ENCODE measurements at regions of chr3 and their contacts with region 1.

Region 1: DNA sequence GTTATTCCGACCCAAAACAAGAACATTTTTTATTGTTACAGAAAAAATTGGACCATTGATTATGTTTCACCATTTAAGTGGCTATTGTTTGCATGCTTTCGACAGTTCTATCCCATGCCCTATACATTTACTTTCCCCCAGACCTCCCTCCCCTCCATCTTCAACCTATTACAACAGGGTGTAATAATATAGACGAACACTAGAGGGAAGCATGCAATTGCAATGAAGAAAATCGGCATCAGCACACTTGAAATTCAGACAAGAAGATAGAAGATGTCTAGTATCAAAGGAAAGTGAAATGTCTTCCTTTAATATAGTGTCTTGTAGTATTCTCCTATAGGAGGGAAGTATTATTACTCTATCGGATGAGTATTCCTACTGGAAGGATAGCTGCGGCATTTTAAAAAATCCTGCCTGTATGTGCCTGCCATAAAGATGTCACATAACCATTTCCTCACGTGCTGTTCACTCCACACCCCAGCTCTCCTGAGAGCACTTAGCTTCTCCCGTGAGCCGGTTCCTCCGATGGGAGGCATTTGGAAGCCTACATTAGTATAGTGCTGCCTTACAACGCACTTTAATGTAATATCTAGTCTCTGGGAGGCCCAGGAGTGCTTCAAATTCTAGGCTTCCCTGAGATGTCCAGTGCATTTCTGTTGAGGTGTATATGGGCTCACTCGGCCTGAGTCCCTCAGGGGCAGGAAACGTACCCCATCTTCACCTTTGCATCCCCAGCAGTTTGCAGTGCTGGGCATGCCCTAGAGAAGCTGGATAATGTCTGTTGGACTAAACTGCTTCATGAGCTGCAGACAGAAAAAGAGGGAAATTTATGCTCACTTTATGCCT is 17.8 kb upstream of the ERICH6 start:
- DNase-seq: peak; percentile 65
- H3K4me3 Mint-ChIP-seq: no peak overlapping the region
- H3K27ac Mint-ChIP-seq: no peak overlapping the region
- H3K4me1 Mint-ChIP-seq: peaks cover 16% of the 10 kb centered on the region
- H3K27me3 Mint-ChIP-seq: no peaks in the 10 kb centered on the region
- CTCF ChIP-seq: peak; percentile 77

Region 2: DNA sequence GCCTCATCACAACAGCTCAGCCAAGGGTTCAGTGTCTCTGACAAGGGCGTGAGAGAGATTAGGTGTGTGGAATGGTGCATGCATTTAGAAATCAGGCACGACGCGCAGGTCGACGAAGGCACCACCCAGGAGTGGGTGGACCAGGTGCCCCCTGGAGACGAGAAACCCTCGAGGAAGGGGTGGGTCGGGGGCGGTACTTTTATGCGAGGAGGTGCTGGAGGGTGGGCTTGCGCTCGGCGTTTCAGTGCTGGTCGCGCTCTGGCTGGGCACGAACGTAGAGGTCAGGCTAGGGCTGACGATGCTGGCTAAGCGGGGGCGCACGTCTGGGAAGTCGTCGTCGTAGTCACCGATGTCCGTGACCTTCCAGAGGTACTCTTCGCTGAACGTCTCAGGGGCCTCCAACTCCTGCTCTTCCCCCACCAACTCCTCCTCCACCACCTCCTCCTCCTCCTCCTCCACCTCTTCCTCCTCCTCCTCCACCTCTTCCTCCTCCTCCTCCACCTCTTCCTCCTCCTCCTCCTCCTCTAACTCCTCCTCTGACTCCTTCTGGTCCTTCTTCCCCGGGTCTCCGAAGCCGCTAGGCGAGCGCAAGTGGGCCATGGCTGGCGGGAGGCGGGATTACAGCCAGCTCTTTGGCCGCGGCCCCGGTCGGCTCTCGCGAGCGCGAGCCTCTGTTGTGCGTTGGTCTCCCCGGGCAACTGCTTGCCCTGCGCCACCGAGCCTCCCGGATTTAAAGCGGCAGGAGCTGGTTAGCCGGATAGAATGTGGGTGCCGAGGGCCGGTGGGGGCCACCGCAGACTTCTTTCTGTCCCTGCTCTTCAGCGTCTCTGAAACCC is 18.0 kb before region 1 on chr3 and contains the start of gene ERICH6:
- CTCF ChIA-PET with region 1: interaction called, 11 read pairs
- POLR2A ChIA-PET with region 1: interaction called, 3 read pairs
- intact Hi-C with region 1: no loop called
- DNase-seq: peak; percentile 86
- H3K4me3 Mint-ChIP-seq: peak within 1 kb of the TSS; percentile 79
- H3K27ac Mint-ChIP-seq: peak within 1 kb of the TSS; percentile 90
- H3K4me1 Mint-ChIP-seq: peaks cover 10% of the 10 kb centered on the region
- H3K27me3 Mint-ChIP-seq: no peaks in the 10 kb centered on the region
- CTCF ChIP-seq: no peak
- total RNA-seq, gene ERICH6: not detected in 2 replicates

Region 3: DNA sequence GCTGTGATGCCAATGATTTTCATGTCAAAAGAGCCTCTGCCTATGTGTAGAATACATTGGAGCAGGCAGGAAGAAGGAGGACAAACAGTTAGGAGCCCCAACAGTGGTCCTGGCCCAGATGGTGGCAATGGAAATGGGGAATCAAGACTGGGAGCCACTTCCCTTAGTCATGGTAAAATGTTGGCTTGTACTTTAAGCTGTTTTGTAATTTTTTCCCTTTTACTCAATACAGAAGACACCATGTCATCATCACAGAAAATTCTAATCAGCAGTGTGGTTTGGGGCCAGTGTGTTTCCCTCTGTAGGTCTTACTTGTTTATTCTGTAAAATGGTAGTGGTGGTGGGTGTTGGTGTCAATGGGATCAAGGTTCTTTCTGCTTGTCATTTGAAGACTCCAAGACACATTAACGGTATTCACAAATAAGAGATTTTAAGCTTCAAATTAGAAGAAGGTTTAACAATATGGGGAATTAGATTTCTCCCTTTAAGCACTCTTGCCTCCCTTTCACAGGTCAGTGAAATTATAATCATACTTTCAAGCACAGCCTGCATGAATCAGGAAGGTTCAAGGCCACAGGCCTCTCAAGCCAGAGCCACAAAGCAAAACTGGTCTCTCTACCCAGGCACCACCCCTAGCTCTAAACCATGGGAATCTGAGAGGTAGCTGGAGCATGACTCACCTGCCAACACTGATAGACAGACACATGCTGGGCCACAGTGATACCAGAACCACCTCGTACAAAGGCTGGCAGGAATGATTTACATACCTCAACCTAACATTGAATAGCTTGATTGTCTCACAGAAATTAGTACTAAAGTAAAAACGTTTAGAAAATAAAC is 16.6 kb after region 1 on chr3:
- CTCF ChIA-PET with region 1: interaction called, 10 read pairs
- POLR2A ChIA-PET with region 1: interaction called, 3 read pairs
- intact Hi-C with region 1: no loop called
- DNase-seq: peak; percentile 68
- H3K4me3 Mint-ChIP-seq: no peak overlapping the region
- H3K27ac Mint-ChIP-seq: no peak overlapping the region
- H3K4me1 Mint-ChIP-seq: peaks cover 37% of the 10 kb centered on the region
- H3K27me3 Mint-ChIP-seq: no peaks in the 10 kb centered on the region
- CTCF ChIP-seq: no peak

Region 4: DNA sequence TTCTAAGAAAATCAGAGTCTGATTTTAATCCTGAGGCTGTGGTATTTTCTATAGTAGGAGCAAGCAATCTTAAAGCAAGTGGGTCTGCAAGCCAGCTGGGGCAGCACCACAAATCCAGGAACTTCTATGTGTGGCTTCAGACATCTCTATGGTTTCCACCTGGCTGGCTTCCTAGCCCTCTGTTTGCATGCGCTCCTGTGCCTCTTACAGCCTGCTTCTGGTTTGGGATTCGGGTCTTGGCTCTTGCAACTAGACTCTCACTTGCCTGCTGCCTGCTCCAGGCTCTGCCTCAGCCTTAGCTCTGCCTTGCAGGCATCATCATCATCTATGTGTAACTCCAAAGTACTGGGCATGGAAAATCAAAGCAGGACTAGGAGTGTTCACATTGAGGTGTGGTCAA is 140.3 kb after region 1 on chr3:
- CTCF ChIA-PET with region 1: interaction called, 55 read pairs
- POLR2A ChIA-PET with region 1: interaction called, 4 read pairs
- intact Hi-C with region 1: loop called (anchors 1 kb)
- DNase-seq: no peak
- H3K4me3 Mint-ChIP-seq: no peak overlapping the region
- H3K27ac Mint-ChIP-seq: no peak overlapping the region
- H3K4me1 Mint-ChIP-seq: peaks cover 6% of the 10 kb centered on the region
- H3K27me3 Mint-ChIP-seq: no peaks in the 10 kb centered on the region
- CTCF ChIP-seq: no peak

Region 5: GRCh38 chr3:150925751-150926201 is 204.3 kb after region 1 on chr3:
- CTCF ChIA-PET with region 1: interaction called, 7 read pairs
- POLR2A ChIA-PET with region 1: no interaction called
- intact Hi-C with region 1: loop called (anchors 5 kb)
- DNase-seq: peak; percentile 72
- H3K4me3 Mint-ChIP-seq: no peak overlapping the region
- H3K27ac Mint-ChIP-seq: no peak overlapping the region
- H3K4me1 Mint-ChIP-seq: no peaks in the 10 kb centered on the region
- H3K27me3 Mint-ChIP-seq: peaks cover 5% of the 10 kb centered on the region
- CTCF ChIP-seq: peak; percentile 75

Measured in MCF 10A (cell line).